CD4-positive, alpha-beta T cell (primary cell): ENCODE measurements at regions of chr11 and their contacts with region 1.

Region 1: GRCh38 chr11:20387241-20388095 is at the start of gene PRMT3:
- DNase-seq: peak; percentile 94 to 99 (median 97)
- ATAC-seq: peak; percentile 87
- H3K4me3 ChIP-seq: peak within 1 kb of the TSS; percentile 96
- H3K4me3 Mint-ChIP-seq: peak within 1 kb of the TSS; percentile 99
- H3K27ac ChIP-seq: peak within 1 kb of the TSS; percentile 87 to 97
- H3K27ac Mint-ChIP-seq: peak within 1 kb of the TSS; percentile 99
- H3K4me1 ChIP-seq: peaks cover 20% of the 10 kb centered on the region
- H3K4me1 Mint-ChIP-seq: peaks cover 27% of the 10 kb centered on the region
- H3K27me3 ChIP-seq: no peaks in the 10 kb centered on the region
- H3K27me3 Mint-ChIP-seq: no peaks in the 10 kb centered on the region
- CTCF ChIP-seq: peak; percentile 91
- total RNA-seq, gene PRMT3: 11.2 to 11.8 TPM

Region 2: GRCh38 chr11:19116971-19117750 is 1270.3 kb before region 1 on chr11 and contains the start of gene ZDHHC13:
- CTCF ChIA-PET with region 1: no interaction called
- POLR2A ChIA-PET with region 1: no interaction called
- intact Hi-C with region 1: loop called in 1 of 2 experiments (anchors 10 kb)
- DNase-seq: peak; percentile 84 to 97 (median 92)
- ATAC-seq: peak; percentile 99
- H3K4me3 ChIP-seq: peak within 1 kb of the TSS; percentile 94
- H3K4me3 Mint-ChIP-seq: peak within 1 kb of the TSS; percentile 92
- H3K27ac ChIP-seq: no peak within 1 kb of the TSS
- H3K27ac Mint-ChIP-seq: peak within 1 kb of the TSS; percentile 80
- H3K4me1 ChIP-seq: peaks cover 29% of the 10 kb centered on the region
- H3K4me1 Mint-ChIP-seq: peaks cover 58% of the 10 kb centered on the region
- H3K27me3 ChIP-seq: no peaks in the 10 kb centered on the region
- H3K27me3 Mint-ChIP-seq: no peaks in the 10 kb centered on the region
- CTCF ChIP-seq: no peak
- total RNA-seq, gene ZDHHC13: 3.6 to 6.6 TPM

Region 3: GRCh38 chr11:19712281-19713220 is 674.9 kb before region 1 on chr11 and contains the start of gene NAV2:
- CTCF ChIA-PET with region 1: no interaction called
- POLR2A ChIA-PET with region 1: no interaction called
- intact Hi-C with region 1: loop called in 1 of 2 experiments (anchors 10 kb)
- DNase-seq: peak; percentile 46 to 89 (median 64)
- ATAC-seq: peak; percentile 98
- H3K4me3 ChIP-seq: peak within 1 kb of the TSS; percentile 70
- H3K4me3 Mint-ChIP-seq: peak within 1 kb of the TSS; percentile 95
- H3K27ac ChIP-seq: peak within 1 kb of the TSS; percentile 10 to 19
- H3K27ac Mint-ChIP-seq: peak within 1 kb of the TSS; percentile 58
- H3K4me1 ChIP-seq: peaks cover 31% of the 10 kb centered on the region
- H3K4me1 Mint-ChIP-seq: peaks cover 30% of the 10 kb centered on the region
- H3K27me3 ChIP-seq: peaks cover 20 to 22% of the 10 kb centered on the region in 2 experiments
- H3K27me3 Mint-ChIP-seq: peaks cover 41% of the 10 kb centered on the region
- CTCF ChIP-seq: no peak
- total RNA-seq, gene NAV2: 0.55 to 0.64 TPM

Region 4: DNA sequence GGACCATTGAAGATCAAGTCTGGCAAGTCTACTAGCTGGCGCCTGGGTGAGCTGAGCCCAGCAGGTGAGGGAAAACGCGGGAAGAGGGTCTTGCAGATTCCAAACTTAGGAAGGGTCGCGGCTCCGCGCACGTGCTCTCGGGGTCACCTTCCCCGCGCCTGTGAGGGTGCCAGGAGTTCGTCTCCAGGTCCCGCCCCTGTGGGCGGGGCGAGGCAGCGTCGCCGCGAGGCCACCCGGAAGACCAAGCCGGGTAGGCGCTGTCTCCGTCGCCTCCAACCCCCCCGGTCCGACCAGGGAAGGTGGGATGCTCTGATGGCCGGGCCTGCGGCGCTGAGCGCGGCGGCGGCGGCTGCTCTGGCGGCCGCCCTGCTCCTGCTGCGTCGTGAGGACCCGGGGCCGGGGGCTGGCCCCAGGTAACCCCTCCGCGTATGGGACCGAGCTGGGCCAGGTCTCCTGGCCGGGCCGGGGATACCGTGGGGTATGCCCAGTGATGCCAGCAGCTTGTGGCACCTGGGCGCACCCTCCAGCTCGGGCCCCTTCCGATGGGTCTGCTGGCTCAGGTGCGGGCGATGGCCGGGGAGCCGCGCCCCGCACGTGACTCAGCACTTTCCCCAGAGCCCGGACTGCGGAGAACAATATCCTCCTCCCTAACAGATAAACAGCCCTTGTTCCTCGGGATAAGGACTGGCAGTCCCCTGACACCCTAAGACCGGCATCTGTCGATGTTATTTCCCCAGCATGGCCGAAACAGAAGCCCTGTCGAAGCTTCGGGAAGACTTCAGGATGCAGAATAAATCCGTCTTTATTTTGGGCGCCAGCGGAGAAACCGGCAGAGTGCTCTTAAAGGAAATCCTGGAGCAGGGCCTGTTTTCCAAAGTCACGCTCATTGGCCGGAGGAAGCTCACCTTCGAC is 23.7 kb before region 1 on chr11 and contains the start of gene HTATIP2:
- CTCF ChIA-PET with region 1: interaction called, 10 read pairs
- POLR2A ChIA-PET with region 1: interaction called, 14 read pairs
- intact Hi-C with region 1: loop called in 1 of 2 experiments (anchors 1 kb)
- DNase-seq: peak; percentile 48 to 89 (median 70)
- ATAC-seq: peak; percentile 91
- H3K4me3 ChIP-seq: peak within 1 kb of the TSS; percentile 74
- H3K4me3 Mint-ChIP-seq: peak within 1 kb of the TSS; percentile 95
- H3K27ac ChIP-seq: peak within 1 kb of the TSS; percentile 48 to 63
- H3K27ac Mint-ChIP-seq: peak within 1 kb of the TSS; percentile 90
- H3K4me1 ChIP-seq: peaks cover 45% of the 10 kb centered on the region
- H3K4me1 Mint-ChIP-seq: peaks cover 68% of the 10 kb centered on the region
- H3K27me3 ChIP-seq: no peaks in the 10 kb centered on the region
- H3K27me3 Mint-ChIP-seq: no peaks in the 10 kb centered on the region
- CTCF ChIP-seq: no peak
- total RNA-seq, gene HTATIP2: 8.1 to 9.8 TPM

Region 5: DNA sequence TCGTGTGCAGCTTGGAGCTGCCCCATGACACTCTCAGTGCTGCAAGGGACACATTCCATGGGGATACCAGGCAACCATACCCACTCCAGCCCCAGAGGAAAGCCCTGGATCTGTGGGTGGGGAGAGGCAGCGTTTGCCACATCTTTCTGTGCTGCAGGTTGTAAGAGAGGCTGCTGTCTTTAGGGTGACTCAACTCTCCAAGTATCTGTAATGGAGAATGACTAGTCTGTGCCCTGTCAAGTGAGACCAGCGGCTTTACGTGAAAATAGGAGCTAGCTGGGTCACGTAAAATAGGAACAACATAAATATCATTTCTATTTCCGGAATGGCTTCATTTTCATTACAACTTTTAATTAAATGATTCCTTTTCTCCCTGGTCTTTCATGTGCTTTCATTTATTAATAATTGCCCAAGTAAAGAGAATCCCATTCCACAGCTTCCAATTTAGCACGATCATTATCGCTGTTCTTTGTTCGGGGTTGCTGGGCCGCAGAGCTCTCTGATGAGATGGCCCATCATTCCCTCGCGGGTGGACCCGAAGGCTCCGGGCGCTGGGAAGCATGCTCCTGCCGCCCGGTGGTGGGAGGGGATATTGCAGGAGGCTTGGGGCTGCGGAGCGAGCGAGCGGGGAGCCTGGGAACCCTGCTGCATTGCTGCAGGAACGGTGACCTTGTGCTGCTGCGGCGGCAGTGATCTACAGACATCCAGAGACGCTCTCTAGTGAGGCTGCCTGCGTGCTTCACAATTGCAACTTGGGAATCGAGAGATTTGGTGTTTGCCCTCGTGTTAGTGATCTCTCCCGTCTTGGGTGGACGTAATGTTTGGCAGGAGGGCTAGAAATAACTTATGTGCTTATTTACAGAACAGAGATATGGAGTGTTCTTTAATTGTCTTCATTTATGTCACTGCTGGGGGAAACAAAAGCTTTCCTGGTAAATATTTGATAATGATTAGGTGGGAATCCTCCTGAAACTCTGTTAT is 222.5 kb after region 1 on chr11:
- CTCF ChIA-PET with region 1: no interaction called
- POLR2A ChIA-PET with region 1: no interaction called
- intact Hi-C with region 1: loop called (anchors 5 to 10 kb)
- DNase-seq: peak in 13 of 14 experiments; percentile 23 to 62 (median 31)
- ATAC-seq: peak; percentile 62
- H3K4me3 ChIP-seq: no peak overlapping the region
- H3K4me3 Mint-ChIP-seq: no peak overlapping the region
- H3K27ac ChIP-seq: no peak overlapping the region
- H3K27ac Mint-ChIP-seq: no peak overlapping the region
- H3K4me1 ChIP-seq: peaks cover 6% of the 10 kb centered on the region
- H3K4me1 Mint-ChIP-seq: peaks cover 7% of the 10 kb centered on the region
- H3K27me3 ChIP-seq: peaks cover 44 to 70% of the 10 kb centered on the region in 2 experiments
- H3K27me3 Mint-ChIP-seq: peaks cover 94% of the 10 kb centered on the region
- CTCF ChIP-seq: peak; percentile 70